Activated naive CD4-positive, alpha-beta T cell treated with anti-CD3 and anti-CD28 coated beads, Interleukin-2, amount 10 ng/mL, durations not matched to agents 7 days and 5 days (primary cell): ENCODE measurements at regions of chr3 and their contacts with region 1.

Region 1: DNA sequence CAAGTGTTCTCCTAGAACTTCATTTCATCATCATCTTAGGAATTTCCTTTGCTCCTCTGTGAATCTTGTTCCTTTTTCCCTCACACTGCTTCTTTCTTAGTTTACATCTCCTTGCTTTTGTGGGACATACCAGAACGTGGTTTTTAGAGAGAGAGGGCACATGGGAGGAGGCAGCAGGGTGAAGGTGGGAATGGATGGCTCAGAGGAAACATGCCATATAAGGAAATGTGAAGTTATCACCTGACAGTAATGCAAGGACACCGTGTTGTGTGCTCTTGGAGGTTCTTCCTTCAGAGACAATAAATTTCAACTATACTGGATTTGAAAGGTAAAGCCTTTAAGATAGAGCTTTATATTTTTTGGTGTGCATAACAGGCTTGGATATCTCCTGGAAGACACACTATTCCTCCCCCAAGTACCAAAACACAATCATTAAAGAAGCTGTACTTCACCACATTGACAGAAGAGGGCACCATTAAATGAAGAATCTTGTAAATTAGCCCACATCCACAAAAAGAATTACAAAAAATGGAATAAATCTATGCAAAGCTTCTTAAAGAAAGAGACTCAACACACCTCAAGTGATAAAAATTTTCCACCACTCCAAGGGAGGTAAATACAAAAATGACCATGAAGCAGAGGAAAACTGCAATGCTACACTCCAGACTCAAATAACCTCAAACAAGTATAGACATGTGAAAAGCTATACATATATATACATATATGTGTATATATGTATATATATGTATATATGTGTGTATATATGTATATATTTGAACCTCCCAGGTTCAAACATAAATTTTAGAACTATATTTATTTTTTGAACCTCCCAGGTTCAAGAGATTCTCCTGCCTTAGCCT is 26.1 kb downstream of the RPL39L start:
- DNase-seq: no peak
- H3K4me3 Mint-ChIP-seq: no peak overlapping the region
- H3K27ac Mint-ChIP-seq: no peak overlapping the region
- H3K4me1 Mint-ChIP-seq: peaks cover 10% of the 10 kb centered on the region
- H3K27me3 Mint-ChIP-seq: no peaks in the 10 kb centered on the region

Region 2: GRCh38 chr3:186882881-186883685 is 230.1 kb before region 1 on chr3:
- CTCF ChIA-PET with region 1: no interaction called
- DNase-seq: peak; percentile 40
- H3K4me3 Mint-ChIP-seq: no peak overlapping the region
- H3K27ac Mint-ChIP-seq: peak overlapping the region; percentile 64
- H3K4me1 Mint-ChIP-seq: peaks cover 47% of the 10 kb centered on the region
- H3K27me3 Mint-ChIP-seq: no peaks in the 10 kb centered on the region

Region 3: DNA sequence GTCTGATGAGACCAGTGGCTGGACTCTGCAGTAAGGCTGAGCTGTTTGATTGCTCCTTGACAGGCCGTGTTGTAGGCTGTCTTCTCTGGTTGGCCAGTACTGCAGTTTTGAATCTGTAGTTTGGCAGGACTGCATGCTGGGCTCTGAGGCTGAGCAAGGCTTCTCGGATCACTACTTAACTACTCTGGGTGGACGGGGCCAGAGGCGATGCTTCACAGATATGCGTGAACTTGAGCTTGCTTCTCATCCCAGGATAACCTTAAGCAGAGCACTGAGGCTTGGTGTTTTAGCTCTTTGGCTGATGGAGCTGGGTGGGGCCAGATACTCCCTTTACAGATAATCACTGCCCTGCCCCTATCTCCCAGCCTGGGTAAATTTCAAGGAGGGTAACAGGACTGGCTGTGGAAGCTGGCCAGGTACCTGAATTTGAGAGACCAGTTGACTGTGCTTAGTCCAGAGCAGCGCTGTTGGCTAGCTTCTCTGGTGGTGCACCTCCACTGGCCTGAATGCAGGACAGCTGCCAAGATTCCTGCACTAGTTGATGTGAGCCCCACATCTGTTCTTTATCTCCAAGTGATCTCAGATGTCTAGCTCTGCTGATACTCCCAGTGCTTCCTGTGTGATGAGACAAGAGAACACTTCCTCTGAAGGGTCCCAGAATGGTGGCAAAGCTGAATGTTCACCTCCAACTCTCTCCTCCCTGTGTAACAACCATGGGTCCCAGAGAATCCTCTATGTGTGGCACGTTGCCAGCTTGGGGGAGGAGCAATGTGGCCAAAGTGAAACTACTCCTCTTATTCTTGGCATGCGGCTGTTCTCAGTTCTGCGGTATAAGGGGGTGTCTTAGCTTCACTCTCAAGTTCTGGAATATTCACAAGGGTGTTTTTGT is 11.7 kb before region 1 on chr3:
- CTCF ChIA-PET with region 1: interaction called, 21 read pairs
- DNase-seq: peak; percentile 69
- H3K4me3 Mint-ChIP-seq: peak overlapping the region; percentile 19
- H3K27ac Mint-ChIP-seq: peak overlapping the region; percentile 0
- H3K4me1 Mint-ChIP-seq: peaks cover 29% of the 10 kb centered on the region
- H3K27me3 Mint-ChIP-seq: peaks cover 3% of the 10 kb centered on the region

Region 4: DNA sequence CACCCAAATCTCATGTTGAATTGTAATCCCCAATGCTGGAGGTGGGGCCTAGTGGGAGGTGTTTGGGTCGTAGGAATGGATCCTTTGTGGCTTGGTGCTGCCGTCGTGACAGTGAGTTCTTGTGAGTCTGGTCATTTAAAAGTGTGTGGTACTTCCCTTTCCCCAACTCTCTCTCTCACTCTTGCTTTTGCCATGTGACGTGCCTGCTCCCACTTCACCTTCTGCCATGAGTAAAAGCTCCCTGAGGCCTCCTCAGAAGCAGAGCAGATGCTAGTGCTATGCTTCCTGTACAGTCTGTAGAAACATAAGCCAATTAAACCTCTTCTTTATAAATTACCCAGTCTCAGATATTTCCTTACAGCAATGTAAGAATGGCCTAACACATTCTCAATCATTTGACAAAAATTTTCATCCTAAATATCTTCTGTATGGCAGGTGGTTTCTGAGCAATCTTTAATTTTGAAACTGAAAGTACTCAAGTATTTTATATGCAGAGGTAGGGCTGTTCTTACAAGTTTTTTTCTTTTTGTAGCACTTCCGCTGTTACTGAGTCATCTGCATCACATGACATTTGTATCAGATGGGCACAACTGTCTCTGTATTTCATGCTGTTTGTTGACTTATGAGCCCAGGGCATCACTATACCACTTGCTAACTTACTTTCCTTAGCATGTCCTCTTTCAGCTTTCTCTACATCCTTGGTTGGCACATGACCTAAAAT is 17.3 kb after region 1 on chr3:
- CTCF ChIA-PET with region 1: interaction called, 20 read pairs
- DNase-seq: peak; percentile 36
- H3K4me3 Mint-ChIP-seq: peak overlapping the region; percentile 43
- H3K27ac Mint-ChIP-seq: peak overlapping the region; percentile 98
- H3K4me1 Mint-ChIP-seq: peaks cover 46% of the 10 kb centered on the region
- H3K27me3 Mint-ChIP-seq: no peaks in the 10 kb centered on the region

Region 5: DNA sequence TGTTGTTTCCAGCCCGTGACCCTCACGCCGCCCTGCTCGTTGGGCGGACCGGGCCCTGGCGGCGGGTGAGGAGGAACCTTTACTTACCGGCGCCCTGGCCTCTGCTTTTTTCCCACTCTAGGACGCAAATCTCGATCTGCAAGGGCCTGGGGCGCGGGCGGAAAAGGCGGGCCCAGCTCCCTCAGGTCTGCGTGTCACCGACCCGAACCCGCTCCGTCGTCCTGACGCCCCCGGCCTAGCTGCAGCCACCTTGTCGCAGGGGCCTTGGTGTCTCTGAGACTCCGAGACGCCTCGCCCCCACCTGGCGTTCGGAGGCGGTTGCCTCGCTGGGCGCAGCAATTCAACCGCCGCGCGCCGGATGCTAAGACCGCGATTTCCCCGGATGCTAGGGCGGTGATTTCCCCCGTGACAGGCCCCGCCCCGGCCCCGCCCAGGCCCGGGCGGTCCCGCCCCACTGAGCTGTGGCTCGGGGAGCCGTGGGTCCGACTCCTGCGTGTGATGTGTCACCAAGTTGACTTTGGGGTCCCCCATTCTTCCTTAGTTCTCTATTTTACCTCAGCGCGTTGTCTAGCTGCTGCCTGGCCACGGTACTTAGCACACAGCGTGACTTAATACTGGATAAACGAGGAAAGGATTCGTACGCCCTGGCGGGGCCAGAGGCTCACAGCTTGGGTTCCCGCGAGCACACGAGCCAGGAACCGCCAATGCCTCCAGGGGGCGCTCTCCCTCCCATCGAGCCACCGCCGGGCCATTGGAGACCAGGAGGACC is 26.1 kb after region 1 on chr3 and contains the start of gene RPL39L:
- CTCF ChIA-PET with region 1: interaction called, 60 read pairs
- DNase-seq: peak; percentile 94
- H3K4me3 Mint-ChIP-seq: peak within 1 kb of the TSS; percentile 85
- H3K27ac Mint-ChIP-seq: peak within 1 kb of the TSS; percentile 95
- H3K4me1 Mint-ChIP-seq: peaks cover 24% of the 10 kb centered on the region
- H3K27me3 Mint-ChIP-seq: peaks cover 13% of the 10 kb centered on the region

Region 6: GRCh38 chr3:187150599-187150998 is 37.4 kb after region 1 on chr3:
- CTCF ChIA-PET with region 1: interaction called, 115 read pairs
- DNase-seq: peak; percentile 73
- H3K4me3 Mint-ChIP-seq: no peak overlapping the region
- H3K27ac Mint-ChIP-seq: no peak overlapping the region
- H3K4me1 Mint-ChIP-seq: peaks cover 6% of the 10 kb centered on the region
- H3K27me3 Mint-ChIP-seq: peaks cover 57% of the 10 kb centered on the region

Region 7: DNA sequence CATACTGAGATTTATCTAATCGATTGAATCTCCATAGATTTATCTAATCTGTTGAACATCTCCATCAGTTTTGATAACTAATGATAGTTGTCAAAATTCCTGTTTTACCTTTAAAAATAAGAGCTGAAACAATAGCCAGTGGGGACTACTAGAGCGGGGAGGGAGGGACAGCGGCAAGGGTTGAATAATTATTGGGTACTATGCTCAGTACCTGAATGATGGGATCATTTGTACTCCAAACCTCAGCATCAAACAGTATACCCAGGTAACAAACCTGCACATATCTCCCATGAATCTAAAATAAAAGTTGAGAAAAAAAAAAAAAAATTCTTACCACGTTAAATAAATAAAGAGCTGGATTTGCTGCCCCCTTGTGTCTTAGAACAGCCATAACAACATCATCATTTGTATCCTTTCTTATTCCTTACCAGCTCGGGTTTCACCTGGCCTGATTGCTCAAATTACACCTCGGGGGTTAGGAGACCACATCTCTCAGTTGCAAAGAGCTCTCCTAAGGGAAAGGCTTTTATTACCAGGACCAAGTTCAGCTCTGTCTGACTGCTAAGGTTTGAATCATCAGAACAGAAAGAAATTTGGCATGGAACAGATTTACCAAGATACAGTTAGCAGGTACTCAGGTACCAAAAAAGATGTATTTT is 51.9 kb after region 1 on chr3:
- CTCF ChIA-PET with region 1: interaction called, 186 read pairs
- DNase-seq: peak; percentile 40
- H3K4me3 Mint-ChIP-seq: no peak overlapping the region
- H3K27ac Mint-ChIP-seq: no peak overlapping the region
- H3K4me1 Mint-ChIP-seq: peaks cover 4% of the 10 kb centered on the region
- H3K27me3 Mint-ChIP-seq: peaks cover 34% of the 10 kb centered on the region